MCF 10A (cell line): ENCODE measurements at regions of chr11 and their contacts with region 1.

Region 1: GRCh38 chr11:45147017-45147728 is 734 bp downstream of the PRDM11 start:
- DNase-seq: peak; percentile 96
- H3K4me3 Mint-ChIP-seq: peak overlapping the region; percentile 85
- H3K27ac Mint-ChIP-seq: peak overlapping the region; percentile 96
- H3K4me1 Mint-ChIP-seq: peaks cover 11% of the 10 kb centered on the region
- H3K27me3 Mint-ChIP-seq: no peaks in the 10 kb centered on the region
- CTCF ChIP-seq: no peak

Region 2: GRCh38 chr11:45180179-45180842 is 33.1 kb after region 1 on chr11:
- CTCF ChIA-PET with region 1: no interaction called
- POLR2A ChIA-PET with region 1: no interaction called
- intact Hi-C with region 1: loop called (anchors 1 kb)
- DNase-seq: peak; percentile 48
- H3K4me3 Mint-ChIP-seq: peak overlapping the region; percentile 65
- H3K27ac Mint-ChIP-seq: peak overlapping the region; percentile 47
- H3K4me1 Mint-ChIP-seq: no peaks in the 10 kb centered on the region
- H3K27me3 Mint-ChIP-seq: no peaks in the 10 kb centered on the region
- CTCF ChIP-seq: peak; percentile 32